ENCODE measurements at regions of chr6 and their contacts with region 1.

Region 1: GRCh38 chr6:1596088-1596852 is 13.4 kb upstream of the FOXC1 start:
- DNase-seq: peak; percentile 68

Region 2: GRCh38 chr6:1053586-1053985 is 542.7 kb before region 1 on chr6:
- in situ Hi-C with region 1: no loop called
- DNase-seq: no peak

Region 3: DNA sequence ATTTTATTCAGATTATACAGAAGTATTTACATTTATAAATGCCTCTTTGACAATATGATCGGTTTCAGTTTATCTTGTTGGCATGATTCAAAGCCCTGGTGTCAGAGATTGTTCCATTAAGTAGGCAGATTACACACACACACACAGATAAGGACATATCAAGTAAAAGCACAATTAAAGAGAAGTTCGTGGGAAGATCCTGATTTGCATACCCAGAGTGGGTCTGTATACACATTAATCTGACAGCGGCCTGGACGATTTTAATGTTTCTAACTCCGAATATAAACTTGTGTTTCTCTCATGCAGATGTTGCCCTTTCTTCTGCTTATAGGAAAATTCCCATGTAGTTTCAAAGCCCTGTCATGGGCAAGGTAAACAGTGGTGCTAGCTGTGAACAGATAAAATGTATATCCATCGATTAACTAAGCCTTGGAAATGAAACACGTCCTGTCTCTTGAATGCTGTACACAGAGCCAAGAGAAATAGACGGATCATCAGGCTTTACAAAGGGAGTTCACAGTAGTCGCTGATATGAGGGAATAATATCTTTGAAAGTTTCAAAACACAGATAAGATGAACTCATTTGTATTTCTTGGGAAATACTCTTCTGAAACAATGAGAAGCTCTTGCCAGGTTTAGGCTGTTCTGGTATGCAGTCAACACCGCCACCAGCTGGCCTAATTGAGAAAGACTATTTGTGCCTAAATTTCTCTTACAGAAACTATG is 757.3 kb after region 1 on chr6:
- in situ Hi-C with region 1: loop called (anchors 25 kb)
- DNase-seq: peak; percentile 78

Region 4: GRCh38 chr6:2450335-2450945 is 854.2 kb after region 1 on chr6:
- in situ Hi-C with region 1: loop called (anchors 25 kb)
- DNase-seq: peak; percentile 1

Region 5: GRCh38 chr6:2634139-2634964 is 1038.1 kb after region 1 on chr6:
- in situ Hi-C with region 1: loop called (anchors 25 kb)
- DNase-seq: peak; percentile 83